Right cardiac atrium (tissue), 5 donors: ENCODE measurements at regions of chr10 and their contacts with region 1.

Region 1: GRCh38 chr10:12264204-12264940 is 68.4 kb downstream of the CDC123 start:
- DNase-seq: peak; percentile 78 to 91 (median 91)
- ATAC-seq: peak; percentile 86 to 87
- H3K4me3 ChIP-seq: peak overlapping the region; percentile 5
- H3K27ac ChIP-seq: no peak overlapping the region
- H3K4me1 ChIP-seq: no peaks in the 10 kb centered on the region
- H3K27me3 ChIP-seq: no peaks in the 10 kb centered on the region

Region 2: DNA sequence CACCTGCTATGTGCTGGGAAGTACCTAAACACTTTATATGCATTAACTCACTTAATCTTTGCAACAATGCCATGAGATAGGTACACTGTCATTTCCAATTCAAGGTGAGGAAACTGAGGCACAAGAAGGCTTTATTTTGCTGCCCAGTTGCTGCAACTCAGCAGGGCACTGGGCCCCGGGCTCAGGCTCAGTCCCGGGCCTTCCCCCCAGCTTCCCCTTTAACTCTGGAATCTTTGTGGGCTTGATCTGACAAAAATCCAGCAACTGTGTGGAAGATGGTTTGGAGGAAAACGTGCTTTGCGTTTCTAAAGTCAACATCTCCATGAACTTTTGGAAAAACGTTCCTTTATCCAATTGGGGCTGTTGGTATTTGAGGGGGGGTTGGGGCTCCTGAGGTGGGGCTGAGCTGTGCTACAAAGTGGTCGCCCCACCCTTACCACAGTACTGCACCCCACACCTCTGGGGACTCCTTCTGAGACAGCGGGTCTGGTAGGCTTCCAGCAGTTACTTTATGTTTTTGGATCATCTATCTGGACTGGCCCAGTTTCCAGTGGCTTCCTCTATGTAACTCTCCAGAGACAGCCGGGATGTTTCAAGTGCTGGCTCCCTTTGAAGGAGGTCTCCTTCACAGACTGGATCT is 44.5 kb after region 1 on chr10:
- intact Hi-C with region 1: no loop called
- DNase-seq: no peak
- ATAC-seq: no peak
- H3K4me3 ChIP-seq: no peak overlapping the region
- H3K27ac ChIP-seq: no peak overlapping the region
- H3K4me1 ChIP-seq: no peaks in the 10 kb centered on the region
- H3K27me3 ChIP-seq: no peaks in the 10 kb centered on the region

Region 3: DNA sequence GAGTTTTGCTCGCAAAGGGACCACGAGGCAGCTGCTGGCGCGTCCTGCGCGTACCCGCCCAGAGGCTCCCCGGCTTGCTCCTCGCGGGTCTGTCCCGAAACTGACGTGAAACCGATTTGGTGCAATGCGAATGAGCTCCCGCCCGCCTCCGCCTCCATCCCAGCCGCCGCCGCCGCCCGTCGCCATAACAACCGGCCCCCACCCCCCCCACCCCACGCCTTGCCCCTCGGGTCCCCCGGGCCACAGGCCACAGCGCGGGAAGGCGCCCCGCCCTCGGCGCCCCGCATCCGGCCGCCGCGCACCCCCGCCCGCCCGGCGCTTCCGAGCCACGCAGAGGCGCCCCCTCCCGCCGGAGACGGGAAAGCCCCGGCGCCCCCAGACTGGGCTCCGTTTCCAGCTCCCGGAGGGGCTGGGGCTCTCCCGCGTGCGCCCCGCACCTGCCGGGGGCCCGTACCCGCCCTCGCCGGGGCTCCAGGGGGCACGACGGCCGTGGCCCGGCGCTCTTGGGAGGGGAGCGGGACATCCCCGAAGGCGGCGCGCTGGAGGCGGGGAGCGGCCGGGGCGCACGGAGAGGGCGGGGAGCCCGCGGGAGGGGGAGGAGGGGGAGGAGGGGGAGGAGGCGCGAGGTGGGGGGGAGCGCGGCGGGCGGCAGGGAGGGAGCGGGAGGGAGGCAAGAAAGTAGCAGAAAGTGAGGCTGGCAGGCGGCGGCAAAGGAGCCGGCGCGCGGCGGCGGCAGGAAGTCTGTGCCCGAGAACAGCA is 84.7 kb after region 1 on chr10 and contains the start of gene CAMK1D:
- intact Hi-C with region 1: loop called in 2 of 4 experiments (anchors 5 to 10 kb)
- DNase-seq: peak; percentile 88 to 96 (median 95)
- ATAC-seq: peak; percentile 85 to 89
- H3K4me3 ChIP-seq: peak within 1 kb of the TSS; percentile 97
- H3K27ac ChIP-seq: peak within 1 kb of the TSS; percentile 89
- H3K4me1 ChIP-seq: no peaks in the 10 kb centered on the region
- H3K27me3 ChIP-seq: no peaks in the 10 kb centered on the region
- total RNA-seq, gene CAMK1D: 26.4 to 44.1 (median 27.6) TPM

Region 4: DNA sequence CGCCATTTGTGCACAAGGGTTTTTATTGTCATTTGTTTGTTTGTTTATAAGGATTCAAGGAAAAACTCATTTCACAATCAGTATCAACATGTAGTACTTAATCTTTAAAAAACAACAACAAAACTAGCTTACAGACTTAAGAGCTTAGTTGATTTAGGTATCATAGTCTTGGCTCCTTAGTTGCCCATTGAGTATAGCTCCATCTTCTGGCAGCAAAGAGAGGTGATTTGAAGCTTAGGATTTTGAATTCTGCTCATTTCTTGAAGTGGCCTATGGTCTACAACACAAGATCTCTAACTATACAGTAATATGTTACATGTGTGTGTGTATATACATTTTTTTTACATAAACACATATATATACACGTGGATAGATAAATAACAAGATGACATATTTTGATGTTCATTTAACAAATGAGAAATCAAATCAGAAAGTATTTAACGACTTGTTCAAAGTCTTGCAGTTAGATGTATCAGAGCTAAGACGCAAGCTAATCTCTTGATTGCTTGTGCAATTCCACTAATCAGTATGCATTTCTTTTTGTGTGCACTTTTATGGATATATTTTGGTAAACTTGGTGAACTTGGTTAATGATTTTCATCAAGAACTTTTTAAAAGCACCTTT is 392.3 kb after region 1 on chr10:
- intact Hi-C with region 1: loop called in 2 of 4 experiments (anchors 10 kb)
- DNase-seq: no peak
- ATAC-seq: peak; percentile 44 to 51
- H3K4me3 ChIP-seq: no peak overlapping the region
- H3K27ac ChIP-seq: no peak overlapping the region
- H3K4me1 ChIP-seq: no peaks in the 10 kb centered on the region
- H3K27me3 ChIP-seq: no peaks in the 10 kb centered on the region

Region 5: GRCh38 chr10:12710594-12711349 is 446.4 kb after region 1 on chr10:
- intact Hi-C with region 1: loop called in 3 of 4 experiments (anchors 2 to 5 kb)
- DNase-seq: peak; percentile 71 to 89 (median 85)
- ATAC-seq: peak; percentile 68 to 73
- H3K4me3 ChIP-seq: no peak overlapping the region
- H3K27ac ChIP-seq: no peak overlapping the region
- H3K4me1 ChIP-seq: peaks cover 7% of the 10 kb centered on the region
- H3K27me3 ChIP-seq: no peaks in the 10 kb centered on the region

Region 6: GRCh38 chr10:13074561-13075451 is 810.4 kb after region 1 on chr10:
- intact Hi-C with region 1: loop called in 1 of 4 experiments (anchors 10 kb)
- DNase-seq: peak; percentile 67 to 85 (median 78)
- ATAC-seq: peak; percentile 80
- H3K4me3 ChIP-seq: no peak overlapping the region
- H3K27ac ChIP-seq: no peak overlapping the region
- H3K4me1 ChIP-seq: no peaks in the 10 kb centered on the region
- H3K27me3 ChIP-seq: no peaks in the 10 kb centered on the region